Heart right ventricle (tissue), 16 donors: ENCODE measurements at regions of chr3 and their contacts with region 1.

Region 1: GRCh38 chr3:53457068-53457467 is 37.3 kb upstream of the CACNA1D start:
- DNase-seq: no peak
- ATAC-seq: no peak
- H3K4me3 ChIP-seq: no peak overlapping the region
- H3K27ac ChIP-seq: no peak overlapping the region
- H3K4me1 ChIP-seq: no peaks in the 10 kb centered on the region
- H3K27me3 ChIP-seq: peaks cover 0 to 17% (median 4%) of the 10 kb centered on the region in 7 donors
- CTCF ChIP-seq: no peak

Region 2: DNA sequence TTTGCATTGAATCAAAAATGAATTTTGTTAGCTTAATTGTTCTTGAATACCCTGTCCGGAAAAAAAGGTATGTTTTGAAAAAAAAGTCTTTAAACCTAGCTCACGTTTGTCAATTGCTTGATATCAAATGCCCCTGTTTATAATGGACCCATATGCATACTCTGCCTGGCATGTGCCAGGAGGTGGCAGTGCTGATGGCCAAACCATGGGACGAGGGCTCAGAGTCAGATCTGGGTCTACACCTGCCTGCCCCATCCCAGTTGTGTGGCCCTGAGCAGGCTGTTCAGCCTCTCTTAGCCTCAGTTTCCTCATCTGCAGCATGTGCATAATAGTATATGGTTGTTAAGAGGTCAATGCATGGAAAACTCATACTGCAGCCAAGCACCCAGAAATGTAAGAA is 257.2 kb before region 1 on chr3:
- intact Hi-C with region 1: no loop called
- DNase-seq: no peak
- ATAC-seq: no peak
- H3K4me3 ChIP-seq: no peak overlapping the region
- H3K27ac ChIP-seq: no peak overlapping the region
- H3K4me1 ChIP-seq: peaks cover under 1 to 25% (median 11%) of the 10 kb centered on the region in 9 donors
- H3K27me3 ChIP-seq: no peaks in the 10 kb centered on the region
- CTCF ChIP-seq: no peak

Region 3: GRCh38 chr3:53478166-53478830 is 21.2 kb after region 1 on chr3:
- intact Hi-C with region 1: loop called in 1 of 10 experiments (anchors 1 kb)
- DNase-seq: no peak
- ATAC-seq: no peak
- H3K4me3 ChIP-seq: no peak overlapping the region
- H3K27ac ChIP-seq: no peak overlapping the region
- H3K4me1 ChIP-seq: no peaks in the 10 kb centered on the region
- H3K27me3 ChIP-seq: peaks cover 0 to 56% (median 9%) of the 10 kb centered on the region in 7 donors
- CTCF ChIP-seq: no peak